MCF 10A (cell line): ENCODE measurements at regions of chr11 and their contacts with region 1.

Region 1: GRCh38 chr11:20397281-20397680 is 9.8 kb downstream of the PRMT3 start:
- DNase-seq: peak; percentile 53
- H3K4me3 Mint-ChIP-seq: no peak overlapping the region
- H3K27ac Mint-ChIP-seq: no peak overlapping the region
- H3K4me1 Mint-ChIP-seq: no peaks in the 10 kb centered on the region
- H3K27me3 Mint-ChIP-seq: no peaks in the 10 kb centered on the region
- CTCF ChIP-seq: peak; percentile 39

Region 2: GRCh38 chr11:20415432-20415831 is 18.2 kb after region 1 on chr11:
- CTCF ChIA-PET with region 1: interaction called, 34 read pairs
- POLR2A ChIA-PET with region 1: interaction called, 3 read pairs
- intact Hi-C with region 1: no loop called
- DNase-seq: no peak
- H3K4me3 Mint-ChIP-seq: no peak overlapping the region
- H3K27ac Mint-ChIP-seq: no peak overlapping the region
- H3K4me1 Mint-ChIP-seq: no peaks in the 10 kb centered on the region
- H3K27me3 Mint-ChIP-seq: no peaks in the 10 kb centered on the region
- CTCF ChIP-seq: no peak

Region 3: GRCh38 chr11:20421946-20422345 is 24.7 kb after region 1 on chr11:
- CTCF ChIA-PET with region 1: interaction called, 11 read pairs
- POLR2A ChIA-PET with region 1: interaction called, 3 read pairs
- intact Hi-C with region 1: no loop called
- DNase-seq: no peak
- H3K4me3 Mint-ChIP-seq: no peak overlapping the region
- H3K27ac Mint-ChIP-seq: no peak overlapping the region
- H3K4me1 Mint-ChIP-seq: no peaks in the 10 kb centered on the region
- H3K27me3 Mint-ChIP-seq: no peaks in the 10 kb centered on the region
- CTCF ChIP-seq: no peak

Region 4: DNA sequence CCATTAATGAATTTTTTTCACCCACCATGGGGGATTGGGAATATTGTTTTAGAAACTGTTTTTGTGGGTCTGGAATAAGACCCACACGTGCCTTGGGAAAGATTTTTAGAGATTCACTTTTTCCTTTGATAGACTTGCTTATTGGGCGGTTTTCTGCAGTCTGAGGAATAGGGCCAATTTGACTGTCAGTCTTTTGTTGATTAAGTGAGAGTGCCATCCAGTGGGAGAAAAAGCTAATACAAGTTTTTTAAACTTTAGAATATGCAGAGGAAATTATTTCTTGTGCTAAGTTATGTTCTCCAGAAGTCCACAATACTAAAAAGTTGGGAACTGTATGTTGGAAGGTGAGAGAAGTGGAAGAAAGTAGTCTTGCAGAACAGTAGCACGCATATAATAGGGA is 46.3 kb after region 1 on chr11:
- CTCF ChIA-PET with region 1: interaction called, 10 read pairs
- POLR2A ChIA-PET with region 1: interaction called, 4 read pairs
- intact Hi-C with region 1: loop called (anchors 5 kb)
- DNase-seq: peak; percentile 32
- H3K4me3 Mint-ChIP-seq: no peak overlapping the region
- H3K27ac Mint-ChIP-seq: peak overlapping the region; percentile 28
- H3K4me1 Mint-ChIP-seq: peaks cover 6% of the 10 kb centered on the region
- H3K27me3 Mint-ChIP-seq: no peaks in the 10 kb centered on the region
- CTCF ChIP-seq: peak; percentile 31